CD8-positive, alpha-beta T cell (primary cell): ENCODE measurements at regions of chr5 and their contacts with region 1.

Region 1: DNA sequence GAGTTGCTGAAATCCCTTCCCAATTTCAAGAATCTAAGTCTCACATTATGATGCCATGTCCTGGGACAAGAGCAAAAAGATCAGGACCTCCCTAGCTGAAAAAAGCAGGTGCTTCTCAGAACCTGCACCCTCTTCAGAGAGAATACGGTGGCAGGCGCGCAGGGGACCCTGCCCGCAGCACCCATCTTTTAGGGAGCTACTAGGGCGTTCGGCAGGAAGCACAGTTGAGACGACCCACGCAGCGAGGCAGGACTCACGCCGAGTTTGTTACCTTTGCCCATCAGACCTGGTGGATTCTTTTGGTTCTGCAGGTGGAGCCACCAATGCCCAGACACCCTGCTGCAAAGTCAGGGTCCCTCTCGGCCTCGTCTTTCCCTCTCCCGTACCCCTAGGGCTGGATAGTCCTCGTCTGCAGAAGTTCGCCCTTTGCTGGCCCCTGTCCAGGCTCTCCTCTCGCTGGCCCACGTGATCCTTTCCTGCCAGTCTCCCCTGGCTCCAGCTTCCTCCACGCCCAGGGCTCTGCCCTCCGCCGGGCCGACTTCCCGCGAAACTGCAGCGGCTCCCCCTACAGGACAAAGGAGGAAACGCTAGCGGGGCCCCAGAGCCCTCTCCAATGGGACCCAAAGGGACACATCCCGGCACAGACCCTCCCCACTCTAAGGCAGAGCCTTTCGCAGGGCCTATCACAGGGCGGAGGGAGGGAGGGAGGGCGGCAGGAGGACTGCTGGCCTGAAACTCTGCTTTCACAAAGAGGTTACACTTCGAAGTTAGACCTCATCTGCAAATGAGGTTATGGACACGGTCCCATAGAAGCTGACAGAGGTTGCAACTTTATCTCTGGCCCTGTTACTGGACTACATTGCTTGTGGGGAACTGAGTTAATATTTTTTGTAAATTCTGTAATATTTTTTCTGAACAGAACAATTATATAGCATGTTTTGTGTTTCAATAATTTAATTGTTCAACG is 28.8 kb downstream of the TMEM174 start:
- DNase-seq: peak; percentile 35 to 81 (median 68)
- ATAC-seq: peak; percentile 89
- H3K4me3 ChIP-seq: no peak overlapping the region
- H3K4me3 Mint-ChIP-seq: peak overlapping the region; percentile 20
- H3K27ac ChIP-seq: no peak overlapping the region
- H3K27ac Mint-ChIP-seq: no peak overlapping the region
- H3K4me1 ChIP-seq: peaks cover 14% of the 10 kb centered on the region
- H3K4me1 Mint-ChIP-seq: peaks cover 10% of the 10 kb centered on the region
- H3K27me3 ChIP-seq: peaks cover 3 to 9% of the 10 kb centered on the region in 2 experiments
- H3K27me3 Mint-ChIP-seq: peaks cover 68% of the 10 kb centered on the region
- CTCF ChIP-seq: peak; percentile 84

Region 2: GRCh38 chr5:72366324-72366976 is 835.4 kb before region 1 on chr5:
- CTCF ChIA-PET with region 1: no interaction called
- POLR2A ChIA-PET with region 1: no interaction called
- intact Hi-C with region 1: loop called in 1 of 2 experiments (anchors 5 kb)
- DNase-seq: peak in 5 of 9 experiments; percentile 1 to 49 (median 14)
- ATAC-seq: peak; percentile 44
- H3K4me3 ChIP-seq: no peak overlapping the region
- H3K4me3 Mint-ChIP-seq: no peak overlapping the region
- H3K27ac ChIP-seq: no peak overlapping the region
- H3K27ac Mint-ChIP-seq: no peak overlapping the region
- H3K4me1 ChIP-seq: no peaks in the 10 kb centered on the region
- H3K4me1 Mint-ChIP-seq: no peaks in the 10 kb centered on the region
- H3K27me3 ChIP-seq: no peaks in the 10 kb centered on the region
- H3K27me3 Mint-ChIP-seq: no peaks in the 10 kb centered on the region
- CTCF ChIP-seq: no peak

Region 3: DNA sequence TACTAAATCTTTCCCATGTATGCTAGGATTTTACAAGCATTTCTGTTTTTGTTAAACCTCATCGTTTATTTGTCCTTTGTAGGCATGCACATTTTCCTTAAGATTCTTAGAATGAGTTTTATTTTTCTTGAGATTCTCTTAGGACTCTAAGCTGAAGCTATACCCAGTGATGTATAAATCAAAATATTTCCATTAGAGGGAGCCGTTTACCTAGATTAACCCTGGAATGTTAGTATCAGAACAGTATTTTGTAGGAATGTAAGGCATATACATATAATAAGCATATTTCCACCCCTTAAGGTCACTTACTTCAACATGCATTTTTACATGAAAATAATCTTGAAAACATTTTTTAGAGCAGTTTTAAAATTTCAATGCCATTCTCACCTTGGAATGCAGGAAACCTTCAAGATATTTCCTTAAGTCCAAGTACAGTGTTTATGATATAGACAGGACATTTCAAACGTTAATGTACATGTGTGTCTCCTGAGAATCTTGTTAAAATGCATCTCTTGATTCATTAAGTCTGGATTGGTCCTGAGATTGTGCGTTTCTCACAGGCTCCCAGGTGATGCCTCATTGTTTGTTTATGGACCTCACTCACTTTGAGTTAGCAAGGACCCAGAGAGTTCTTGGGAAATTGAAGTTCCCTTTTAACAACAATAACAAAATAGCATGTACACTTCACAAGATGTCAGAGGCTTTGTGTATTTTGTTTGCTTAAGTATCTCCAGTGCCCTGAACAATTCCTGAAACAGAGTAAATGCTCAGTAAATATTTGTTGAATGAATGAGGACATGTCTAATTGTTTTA is 280.9 kb before region 1 on chr5:
- CTCF ChIA-PET with region 1: interaction called, 4 read pairs
- POLR2A ChIA-PET with region 1: no interaction called
- intact Hi-C with region 1: loop called in 1 of 2 experiments (anchors 2 kb)
- DNase-seq: peak in 1 of 9 experiments; percentile 12
- ATAC-seq: no peak
- H3K4me3 ChIP-seq: no peak overlapping the region
- H3K4me3 Mint-ChIP-seq: no peak overlapping the region
- H3K27ac ChIP-seq: no peak overlapping the region
- H3K27ac Mint-ChIP-seq: no peak overlapping the region
- H3K4me1 ChIP-seq: no peaks in the 10 kb centered on the region
- H3K4me1 Mint-ChIP-seq: no peaks in the 10 kb centered on the region
- H3K27me3 ChIP-seq: no peaks in the 10 kb centered on the region
- H3K27me3 Mint-ChIP-seq: peaks cover under 1% of the 10 kb centered on the region
- CTCF ChIP-seq: no peak

Region 4: GRCh38 chr5:73088026-73088425 is 113.8 kb before region 1 on chr5:
- CTCF ChIA-PET with region 1: interaction called, 20 read pairs
- POLR2A ChIA-PET with region 1: no interaction called
- intact Hi-C with region 1: loop called in 1 of 2 experiments (anchors 1 kb)
- DNase-seq: no peak
- ATAC-seq: no peak
- H3K4me3 ChIP-seq: no peak overlapping the region
- H3K4me3 Mint-ChIP-seq: no peak overlapping the region
- H3K27ac ChIP-seq: no peak overlapping the region
- H3K27ac Mint-ChIP-seq: no peak overlapping the region
- H3K4me1 ChIP-seq: no peaks in the 10 kb centered on the region
- H3K4me1 Mint-ChIP-seq: peaks cover 2% of the 10 kb centered on the region
- H3K27me3 ChIP-seq: no peaks in the 10 kb centered on the region
- H3K27me3 Mint-ChIP-seq: peaks cover 7% of the 10 kb centered on the region
- CTCF ChIP-seq: no peak

Region 5: DNA sequence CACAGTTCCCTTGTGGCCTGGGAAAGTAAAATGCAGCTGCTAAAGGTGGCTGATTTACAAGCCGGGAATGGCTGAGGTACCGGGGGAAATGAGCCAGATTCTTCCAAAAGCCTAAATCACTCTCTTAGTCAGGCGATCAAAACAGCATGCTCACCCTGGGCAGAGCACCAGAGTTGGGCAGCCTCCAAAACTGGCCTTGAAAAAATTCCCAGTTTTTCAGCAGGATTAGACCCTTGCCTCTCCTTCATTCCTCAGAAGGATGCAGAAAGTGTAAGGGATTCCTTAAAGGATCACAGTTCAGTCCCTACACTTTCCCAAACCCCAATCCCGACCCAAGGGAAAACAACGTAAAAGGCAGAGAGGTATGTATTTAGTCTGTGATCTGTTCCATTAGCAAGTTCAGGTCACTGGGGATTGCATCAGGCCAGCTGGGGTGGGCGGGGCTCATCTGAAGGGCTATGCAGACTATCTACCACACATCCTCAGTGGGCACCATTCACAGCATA is 11.9 kb before region 1 on chr5:
- CTCF ChIA-PET with region 1: interaction called, 10 read pairs
- POLR2A ChIA-PET with region 1: no interaction called
- intact Hi-C with region 1: no loop called
- DNase-seq: no peak
- ATAC-seq: no peak
- H3K4me3 ChIP-seq: no peak overlapping the region
- H3K4me3 Mint-ChIP-seq: no peak overlapping the region
- H3K27ac ChIP-seq: no peak overlapping the region
- H3K27ac Mint-ChIP-seq: no peak overlapping the region
- H3K4me1 ChIP-seq: no peaks in the 10 kb centered on the region
- H3K4me1 Mint-ChIP-seq: no peaks in the 10 kb centered on the region
- H3K27me3 ChIP-seq: no peaks in the 10 kb centered on the region
- H3K27me3 Mint-ChIP-seq: peaks cover 61% of the 10 kb centered on the region
- CTCF ChIP-seq: no peak

Region 6: GRCh38 chr5:74105126-74105780 is 903.4 kb after region 1 on chr5:
- CTCF ChIA-PET with region 1: no interaction called
- POLR2A ChIA-PET with region 1: no interaction called
- intact Hi-C with region 1: no loop called
- DNase-seq: no peak
- ATAC-seq: no peak
- H3K4me3 ChIP-seq: no peak overlapping the region
- H3K4me3 Mint-ChIP-seq: no peak overlapping the region
- H3K27ac ChIP-seq: no peak overlapping the region
- H3K27ac Mint-ChIP-seq: no peak overlapping the region
- H3K4me1 ChIP-seq: no peaks in the 10 kb centered on the region
- H3K4me1 Mint-ChIP-seq: no peaks in the 10 kb centered on the region
- H3K27me3 ChIP-seq: no peaks in the 10 kb centered on the region
- H3K27me3 Mint-ChIP-seq: peaks cover 22% of the 10 kb centered on the region
- CTCF ChIP-seq: no peak

Region 7: DNA sequence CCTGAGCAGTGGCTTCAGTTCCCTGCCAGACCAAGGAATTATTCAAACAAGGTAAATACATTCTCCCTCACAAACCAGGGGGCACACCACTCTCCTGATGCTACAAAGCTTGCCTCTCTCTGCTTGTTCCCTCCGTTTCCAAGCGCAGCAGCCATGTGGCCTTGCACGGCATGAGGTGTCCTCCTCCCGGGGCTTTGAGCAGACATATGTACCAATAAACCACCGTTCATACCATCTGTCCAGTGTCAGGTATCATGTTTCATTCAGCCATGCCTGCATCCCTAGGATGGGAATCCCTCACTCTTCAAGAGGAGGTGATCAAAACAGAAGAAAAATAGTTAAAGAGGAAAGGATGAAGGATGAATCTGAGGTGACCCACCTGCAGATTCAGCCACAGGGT is 1156.0 kb after region 1 on chr5:
- CTCF ChIA-PET with region 1: no interaction called
- POLR2A ChIA-PET with region 1: no interaction called
- intact Hi-C with region 1: no loop called
- DNase-seq: no peak
- ATAC-seq: no peak
- H3K4me3 ChIP-seq: no peak overlapping the region
- H3K4me3 Mint-ChIP-seq: no peak overlapping the region
- H3K27ac ChIP-seq: no peak overlapping the region
- H3K27ac Mint-ChIP-seq: no peak overlapping the region
- H3K4me1 ChIP-seq: no peaks in the 10 kb centered on the region
- H3K4me1 Mint-ChIP-seq: no peaks in the 10 kb centered on the region
- H3K27me3 ChIP-seq: no peaks in the 10 kb centered on the region
- H3K27me3 Mint-ChIP-seq: no peaks in the 10 kb centered on the region
- CTCF ChIP-seq: no peak